H1 (cell line): ENCODE measurements at regions of chr2 and their contacts with region 1.

Region 1: DNA sequence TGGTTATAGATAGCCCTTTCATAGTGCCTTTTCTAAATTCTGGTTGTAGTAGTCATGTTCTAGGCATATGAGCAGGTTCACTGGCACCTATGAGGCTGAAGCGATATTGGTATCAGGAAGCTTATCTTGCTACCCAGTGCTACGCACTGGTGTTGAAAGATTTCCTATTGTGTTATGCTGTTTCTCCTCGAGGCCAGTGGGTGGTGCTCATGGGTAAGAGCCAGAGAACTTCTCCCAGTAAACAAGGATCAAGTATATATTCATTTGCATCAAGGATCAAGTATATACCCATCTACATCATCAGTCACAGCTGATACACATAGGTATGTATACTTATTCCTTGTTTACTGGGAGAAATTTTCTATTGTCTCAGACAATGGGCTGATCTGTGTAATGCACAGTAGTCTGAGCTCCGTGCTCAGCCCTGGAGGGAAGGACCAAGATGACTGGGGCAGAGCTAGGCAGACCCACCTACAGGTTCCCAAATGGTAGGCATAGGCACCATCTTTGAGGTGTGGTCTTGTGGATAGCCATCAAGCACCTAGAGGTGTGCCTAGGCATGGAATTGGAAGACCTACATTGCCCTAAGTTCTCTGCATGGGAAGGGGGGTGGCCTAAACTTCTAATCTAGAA is 101.2 kb upstream of the GALNT13 start:
- DNase-seq: no peak
- H3K4me3 ChIP-seq: no peak overlapping the region
- H3K27ac ChIP-seq: no peak overlapping the region
- H3K4me1 ChIP-seq: no peaks in the 10 kb centered on the region
- H3K27me3 ChIP-seq: no peaks in the 10 kb centered on the region
- CTCF ChIP-seq: peak in 2 of 3 experiments; percentile 51 to 78; a peak in 3 of 4 replicates
- EP300 ChIP-seq: no peak
- POLR2A ChIP-seq: no peak
- RAD21 ChIP-seq: peak; percentile 80 to 81

Region 2: DNA sequence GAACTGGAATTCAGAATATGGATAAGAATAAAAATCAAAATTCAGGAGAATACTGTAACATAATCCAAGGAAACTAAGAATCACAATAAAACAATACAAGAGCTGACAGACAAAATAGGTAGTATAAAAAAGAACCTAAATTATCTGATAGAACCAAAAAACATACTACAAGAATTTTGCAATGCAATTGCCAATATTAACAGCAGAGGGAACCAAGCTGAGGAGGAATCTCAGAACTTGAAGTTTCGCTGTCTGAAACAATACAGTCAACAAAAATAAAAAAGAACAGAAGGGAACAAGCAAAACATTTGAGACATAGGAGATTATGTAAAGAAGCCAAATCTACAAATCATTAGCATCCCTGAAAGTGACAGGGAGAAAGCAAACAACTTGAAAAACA is 17.1 kb after region 1 on chr2:
- CTCF ChIA-PET with region 1: interaction called, 14 read pairs
- POLR2A ChIA-PET with region 1: no interaction called
- DNase-seq: no peak
- H3K4me3 ChIP-seq: no peak overlapping the region
- H3K27ac ChIP-seq: no peak overlapping the region
- H3K4me1 ChIP-seq: no peaks in the 10 kb centered on the region
- H3K27me3 ChIP-seq: no peaks in the 10 kb centered on the region
- CTCF ChIP-seq: peak in 1 of 3 experiments; percentile 17; a peak in 1 of 4 replicates
- EP300 ChIP-seq: no peak
- POLR2A ChIP-seq: no peak
- RAD21 ChIP-seq: peak; percentile 36

Region 3: DNA sequence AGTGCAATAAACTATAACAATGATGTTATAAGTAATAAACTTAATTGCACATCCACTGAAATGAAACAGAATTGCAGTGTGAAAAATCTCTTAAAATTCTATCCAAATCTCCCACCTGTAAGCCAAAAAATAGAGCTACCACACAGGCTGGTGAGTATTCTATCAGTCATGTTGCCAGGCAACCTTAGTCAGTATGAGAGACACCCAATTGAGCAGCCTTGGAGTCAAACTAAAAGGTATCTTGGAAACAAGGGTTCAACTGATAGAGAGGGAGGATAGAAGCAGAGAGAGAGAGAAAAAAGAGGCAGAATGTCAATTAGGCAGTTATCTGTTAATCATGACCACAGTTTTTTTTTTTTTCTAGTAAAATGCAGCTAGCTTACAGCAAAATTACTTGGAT is 147.1 kb after region 1 on chr2:
- CTCF ChIA-PET with region 1: no interaction called
- POLR2A ChIA-PET with region 1: no interaction called
- DNase-seq: no peak
- H3K4me3 ChIP-seq: no peak overlapping the region
- H3K27ac ChIP-seq: no peak overlapping the region
- H3K4me1 ChIP-seq: 0 out of 7 replicates have a peak, but pooled peaks cover 0 to 2% (median 0%) of the 10 kb centered on the region in 4 experiments
- H3K27me3 ChIP-seq: no peaks in the 10 kb centered on the region
- CTCF ChIP-seq: no peak
- EP300 ChIP-seq: no peak
- POLR2A ChIP-seq: no peak
- RAD21 ChIP-seq: no peak

Region 4: GRCh38 chr2:154375579-154375931 is 605.1 kb after region 1 on chr2:
- CTCF ChIA-PET with region 1: interaction called, 18 read pairs
- POLR2A ChIA-PET with region 1: no interaction called
- DNase-seq: no peak
- H3K4me3 ChIP-seq: no peak overlapping the region
- H3K27ac ChIP-seq: no peak overlapping the region
- H3K4me1 ChIP-seq: peaks cover 0 to 5% (median 2%) of the 10 kb centered on the region in 4 experiments; a peak in 2 of 7 replicates
- H3K27me3 ChIP-seq: no peaks in the 10 kb centered on the region
- CTCF ChIP-seq: peak in 2 of 3 experiments; percentile 19 to 38; a peak in 2 of 4 replicates
- EP300 ChIP-seq: no peak
- POLR2A ChIP-seq: no peak
- RAD21 ChIP-seq: peak; percentile 79 to 80